CD8-positive, alpha-beta memory T cell (primary cell): ENCODE measurements at regions of chr17 and their contacts with region 1.

Region 1: GRCh38 chr17:17681187-17681848 is at the start of gene RAI1:
- DNase-seq: peak; percentile 63 to 80 (median 76)
- H3K4me3 ChIP-seq: peak within 1 kb of the TSS; percentile 66
- H3K4me3 Mint-ChIP-seq: peak within 1 kb of the TSS; percentile 84 to 98 (median 89)
- H3K27ac ChIP-seq: peak within 1 kb of the TSS; percentile 67
- H3K27ac Mint-ChIP-seq: peak within 1 kb of the TSS; percentile 80 to 97 (median 86)
- H3K4me1 ChIP-seq: peaks cover 30% of the 10 kb centered on the region
- H3K4me1 Mint-ChIP-seq: peaks cover 23 to 41% (median 35%) of the 10 kb centered on the region in 3 donors
- H3K27me3 ChIP-seq: no peaks in the 10 kb centered on the region
- H3K27me3 Mint-ChIP-seq: peaks cover 0 to 2% of the 10 kb centered on the region in 2 donors
- total RNA-seq, gene RAI1: 19.7 to 20.2 TPM

Region 2: GRCh38 chr17:17387830-17388441 is 293.4 kb before region 1 on chr17:
- CTCF ChIA-PET with region 1: no interaction called
- POLR2A ChIA-PET with region 1: no interaction called
- DNase-seq: no peak
- H3K4me3 ChIP-seq: no peak overlapping the region
- H3K4me3 Mint-ChIP-seq: no peak overlapping the region
- H3K27ac ChIP-seq: no peak overlapping the region
- H3K27ac Mint-ChIP-seq: no peak overlapping the region
- H3K4me1 ChIP-seq: peaks cover 15% of the 10 kb centered on the region
- H3K4me1 Mint-ChIP-seq: peaks cover 16 to 22% (median 20%) of the 10 kb centered on the region in 3 donors
- H3K27me3 ChIP-seq: no peaks in the 10 kb centered on the region
- H3K27me3 Mint-ChIP-seq: peaks cover 2 to 11% of the 10 kb centered on the region in 2 donors

Region 3: DNA sequence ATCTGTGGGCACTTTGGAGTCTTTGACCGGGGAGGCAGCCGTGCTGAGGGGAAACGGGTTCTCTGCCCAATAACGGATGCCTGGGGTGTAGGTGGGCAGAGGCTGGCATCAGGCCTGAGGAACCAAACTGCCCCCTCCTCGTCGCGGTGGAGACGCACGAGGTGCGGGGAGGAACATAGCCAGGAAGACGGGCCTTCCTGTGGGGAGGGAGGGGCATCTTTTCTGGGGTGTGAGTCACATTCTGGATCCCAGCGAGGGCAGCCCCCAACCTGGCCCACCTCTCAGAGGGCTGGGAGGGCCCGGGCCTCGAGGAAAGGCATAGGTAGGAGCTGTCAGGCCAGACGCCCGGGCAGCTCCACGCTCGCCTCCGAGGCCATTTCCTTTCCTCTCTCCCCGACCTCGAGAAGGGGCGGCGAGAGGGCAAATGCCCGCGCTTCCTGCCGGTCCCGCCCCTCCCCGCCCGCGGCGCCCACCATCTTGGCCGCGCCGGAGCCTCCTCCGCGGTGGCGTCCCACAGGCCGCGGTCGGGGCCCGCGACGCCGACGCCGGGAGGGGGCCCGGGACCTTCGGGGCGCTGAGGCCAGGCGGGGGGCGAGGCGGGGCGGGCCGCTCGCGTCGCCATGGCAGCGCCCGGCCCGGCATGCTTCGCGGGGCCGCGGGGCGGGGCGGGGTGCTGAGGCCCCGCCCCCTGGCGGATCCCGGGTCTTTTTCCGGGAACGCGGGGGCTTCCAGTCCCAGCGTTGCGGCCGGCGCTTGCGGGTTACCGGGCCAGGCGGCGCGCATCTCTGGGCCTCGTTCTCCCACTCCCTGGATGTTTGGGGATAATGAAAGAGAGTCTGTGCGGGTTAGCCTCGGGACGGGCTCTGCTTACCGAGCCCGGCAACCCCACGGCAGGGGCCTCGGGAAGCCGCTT is 13.1 kb after region 1 on chr17:
- CTCF ChIA-PET with region 1: interaction called, 18 read pairs
- POLR2A ChIA-PET with region 1: interaction called, 8 read pairs
- DNase-seq: peak; percentile 67 to 82 (median 73)
- H3K4me3 ChIP-seq: peak overlapping the region; percentile 93
- H3K4me3 Mint-ChIP-seq: peak overlapping the region; percentile 86 to 94 (median 89)
- H3K27ac ChIP-seq: peak overlapping the region; percentile 91
- H3K27ac Mint-ChIP-seq: peak overlapping the region; percentile 97 to 100 (median 99)
- H3K4me1 ChIP-seq: peaks cover 54% of the 10 kb centered on the region
- H3K4me1 Mint-ChIP-seq: peaks cover 43 to 76% (median 68%) of the 10 kb centered on the region in 3 donors
- H3K27me3 ChIP-seq: no peaks in the 10 kb centered on the region
- H3K27me3 Mint-ChIP-seq: peaks cover 0 to 2% of the 10 kb centered on the region in 2 donors

Region 4: DNA sequence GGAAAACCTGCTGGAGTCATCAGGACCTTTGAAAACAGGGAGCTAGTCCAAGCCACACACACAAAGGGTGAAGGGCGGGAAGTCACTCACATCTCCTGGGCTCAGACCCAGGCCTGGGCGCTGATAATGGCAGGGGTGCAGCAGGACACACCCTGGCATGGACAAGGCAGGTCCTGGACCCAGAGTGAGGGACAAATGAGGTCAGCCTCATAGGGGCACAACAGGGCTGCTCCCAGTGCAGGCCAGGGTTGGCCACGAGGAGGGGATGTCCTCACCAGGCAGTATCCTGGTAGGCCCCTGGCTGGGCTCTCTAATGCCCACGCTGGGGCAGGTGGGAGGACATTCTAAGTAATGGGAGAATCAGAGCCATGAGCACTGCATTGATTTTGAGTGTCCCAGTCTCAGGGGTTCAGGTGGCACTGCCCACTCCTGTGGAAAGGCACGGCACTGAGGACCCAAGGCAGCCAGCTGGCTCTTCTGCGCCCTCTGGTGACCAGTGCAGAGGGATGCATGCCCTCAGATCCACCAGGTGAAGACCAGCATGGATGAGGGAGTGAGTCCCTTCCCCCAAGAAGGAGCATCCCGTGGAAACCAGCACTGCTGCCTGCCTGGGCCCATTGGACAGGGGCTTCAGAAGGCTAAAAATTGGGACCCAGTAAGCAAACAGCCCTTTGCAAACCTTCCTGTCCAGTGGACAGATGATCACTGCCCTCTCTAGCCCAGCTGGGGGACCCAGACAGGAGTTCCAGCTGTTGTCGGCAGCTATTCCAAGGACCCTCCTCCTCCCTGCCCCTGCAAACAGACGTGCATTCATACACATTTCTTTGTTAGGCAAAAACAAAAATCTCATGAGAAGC is 178.8 kb after region 1 on chr17:
- CTCF ChIA-PET with region 1: interaction called, 17 read pairs
- POLR2A ChIA-PET with region 1: no interaction called
- DNase-seq: peak; percentile 60 to 79 (median 62)
- H3K4me3 ChIP-seq: no peak overlapping the region
- H3K4me3 Mint-ChIP-seq: no peak overlapping the region
- H3K27ac ChIP-seq: no peak overlapping the region
- H3K27ac Mint-ChIP-seq: no peak overlapping the region
- H3K4me1 ChIP-seq: peaks cover 37% of the 10 kb centered on the region
- H3K4me1 Mint-ChIP-seq: peaks cover 11 to 31% (median 29%) of the 10 kb centered on the region in 3 donors
- H3K27me3 ChIP-seq: no peaks in the 10 kb centered on the region
- H3K27me3 Mint-ChIP-seq: no peaks in the 10 kb centered on the region

Region 5: GRCh38 chr17:17919169-17920107 is 238.1 kb after region 1 on chr17:
- CTCF ChIA-PET with region 1: interaction called, 10 read pairs
- POLR2A ChIA-PET with region 1: interaction called, 3 read pairs
- DNase-seq: peak; percentile 31 to 75 (median 46)
- H3K4me3 ChIP-seq: no peak overlapping the region
- H3K4me3 Mint-ChIP-seq: no peak overlapping the region
- H3K27ac ChIP-seq: no peak overlapping the region
- H3K27ac Mint-ChIP-seq: peak overlapping the region in 1 of 8 donors; percentile 23
- H3K4me1 ChIP-seq: no peaks in the 10 kb centered on the region
- H3K4me1 Mint-ChIP-seq: peaks cover 4 to 11% (median 6%) of the 10 kb centered on the region in 3 donors
- H3K27me3 ChIP-seq: no peaks in the 10 kb centered on the region
- H3K27me3 Mint-ChIP-seq: no peaks in the 10 kb centered on the region